Dorsolateral prefrontal cortex (tissue), 120 donors: ENCODE measurements at regions of chr12 and their contacts with region 1.

Region 1: GRCh38 chr12:31959161-31959700 is at the start of gene RESF1:
- DNase-seq: peak; percentile 71 to 90 (median 85)
- H3K4me3 ChIP-seq: peak within 1 kb of the TSS; percentile 50 to 88 (median 73)
- H3K27ac ChIP-seq: peak within 1 kb of the TSS; percentile 41 to 95 (median 88)
- H3K27me3 ChIP-seq: no peaks in the 10 kb centered on the region
- CTCF ChIP-seq: peak in 18 of 56 donors; percentile 6 to 47 (median 22)
- total RNA-seq, gene RESF1: 21.6 to 58.1 (median 36.9) TPM

Region 2: DNA sequence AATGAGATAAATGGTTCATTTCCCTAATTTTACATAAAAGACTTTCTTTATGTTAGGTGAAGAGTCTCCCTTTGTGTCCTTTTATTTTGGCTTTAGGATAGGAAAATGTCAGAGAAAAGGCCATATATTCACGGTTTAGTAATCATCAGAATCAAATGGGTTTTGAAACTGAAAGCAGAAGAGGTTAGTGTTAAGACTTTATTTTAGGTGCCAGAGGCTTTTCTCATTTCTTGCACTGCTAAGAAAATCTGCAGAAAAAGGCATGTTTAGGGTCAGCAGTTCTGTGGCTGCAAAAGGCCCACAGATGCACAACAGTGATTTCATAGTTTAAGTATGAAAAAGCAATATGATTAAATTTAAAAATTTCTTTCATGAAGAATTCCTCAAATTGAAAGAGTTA is 552.9 kb before region 1 on chr12:
- intact Hi-C with region 1: loop called in 1 of 2 experiments (anchors 5 kb)
- DNase-seq: no peak
- H3K4me3 ChIP-seq: no peak overlapping the region
- H3K27ac ChIP-seq: peak overlapping the region in 1 of 59 donors; percentile 13
- H3K27me3 ChIP-seq: no peaks in the 10 kb centered on the region
- CTCF ChIP-seq: no peak

Region 3: GRCh38 chr12:31589904-31590641 is 369.2 kb before region 1 on chr12:
- intact Hi-C with region 1: loop called in 1 of 2 experiments (anchors 5 kb)
- DNase-seq: peak; percentile 50 to 77 (median 65)
- H3K4me3 ChIP-seq: peak overlapping the region; percentile 63 to 96 (median 87)
- H3K27ac ChIP-seq: peak overlapping the region; percentile 85 to 98 (median 96)
- H3K27me3 ChIP-seq: no peaks in the 10 kb centered on the region
- CTCF ChIP-seq: peak in 21 of 56 donors; percentile 3 to 50 (median 16)

Region 4: DNA sequence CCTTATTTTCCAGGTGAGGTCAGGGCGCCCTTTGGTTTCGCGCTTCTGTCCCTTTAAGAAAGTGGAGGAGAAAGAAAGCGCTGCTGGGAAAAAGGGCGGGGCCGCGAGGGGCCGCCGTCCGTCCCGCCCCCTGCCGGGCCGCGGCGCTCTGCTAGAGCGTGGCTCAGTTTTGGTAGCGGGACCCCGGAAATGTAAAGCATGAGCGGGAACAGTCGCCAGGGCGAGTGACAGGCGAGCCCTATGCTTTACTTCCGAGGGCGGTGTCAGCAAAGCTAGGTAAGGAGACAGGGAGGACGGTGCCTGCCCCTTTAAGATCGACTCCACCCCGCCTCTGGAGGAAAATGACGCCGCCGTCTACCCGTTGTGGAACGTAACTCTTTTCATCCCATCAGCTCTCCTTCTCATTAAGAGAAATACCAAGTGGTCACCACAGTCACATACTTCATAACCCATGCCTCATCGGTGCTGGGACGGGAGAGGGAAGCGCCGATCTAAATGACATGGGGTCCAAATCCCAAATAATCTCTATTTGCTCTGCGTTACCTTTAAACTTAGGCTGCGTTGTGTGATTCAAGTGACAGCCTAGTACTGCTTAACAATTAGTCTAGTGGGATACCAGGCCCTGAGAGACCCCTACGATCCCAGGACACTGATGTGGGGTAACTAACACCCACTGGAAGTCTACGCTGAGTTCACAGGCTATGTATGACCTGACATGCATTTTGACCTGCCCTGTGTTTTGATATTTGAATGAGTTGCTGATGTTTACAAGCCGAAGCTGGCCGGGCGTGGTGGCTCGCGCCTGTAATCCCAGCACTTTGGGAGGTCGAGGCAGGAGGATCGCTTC is 299.9 kb before region 1 on chr12 and contains the start of gene ETFBKMT:
- intact Hi-C with region 1: loop called (anchors 5 kb)
- DNase-seq: peak; percentile 68 to 94 (median 90)
- H3K4me3 ChIP-seq: peak within 1 kb of the TSS; percentile 59 to 97 (median 81)
- H3K27ac ChIP-seq: peak within 1 kb of the TSS; percentile 84 to 99 (median 96)
- H3K27me3 ChIP-seq: no peaks in the 10 kb centered on the region
- CTCF ChIP-seq: peak; percentile 29 to 89 (median 72)
- total RNA-seq, gene ETFBKMT: 1.6 to 8.4 (median 4.6) TPM

Region 5: DNA sequence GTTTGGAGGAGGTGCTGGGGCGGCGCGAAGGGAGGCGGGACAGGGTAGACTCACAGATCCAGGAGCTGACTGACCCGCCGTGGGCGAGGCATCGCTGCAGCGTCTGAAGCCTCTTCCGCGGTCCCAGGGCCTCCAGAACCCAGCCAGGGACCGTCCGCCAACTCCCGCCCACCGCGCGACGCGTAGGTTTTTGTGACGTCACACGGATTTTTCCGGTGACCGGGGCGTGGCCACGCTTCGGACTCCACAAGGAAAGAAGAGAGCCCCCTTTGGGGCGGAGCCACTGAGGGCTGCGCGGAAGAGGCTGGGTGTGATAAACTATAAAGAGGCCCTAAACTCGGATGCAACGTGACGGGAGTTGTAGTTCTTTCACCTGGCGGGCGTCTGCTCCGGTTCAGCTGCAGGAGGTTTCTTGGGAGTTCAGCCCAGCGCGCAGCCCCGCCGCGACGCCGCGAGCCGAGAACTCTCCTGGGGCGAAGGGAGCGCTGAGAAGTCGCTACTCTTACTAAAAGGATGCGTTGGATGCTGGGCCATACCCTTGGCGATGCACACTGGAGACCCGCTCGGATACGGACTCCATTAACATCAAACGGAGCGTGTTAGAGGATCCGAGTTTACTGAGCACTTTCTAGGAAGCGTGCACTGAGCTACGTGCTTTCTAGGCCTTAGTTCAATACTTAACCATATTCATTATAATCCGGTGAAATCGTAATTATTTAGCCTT is 230.2 kb before region 1 on chr12 and contains the start of gene AMN1:
- intact Hi-C with region 1: loop called (anchors 2 to 5 kb)
- DNase-seq: peak; percentile 98 to 99 (median 99)
- H3K4me3 ChIP-seq: peak within 1 kb of the TSS; percentile 65 to 97 (median 80)
- H3K27ac ChIP-seq: peak within 1 kb of the TSS; percentile 78 to 98 (median 93)
- H3K27me3 ChIP-seq: no peaks in the 10 kb centered on the region
- CTCF ChIP-seq: peak in 45 of 56 donors; percentile 6 to 60 (median 37)
- total RNA-seq, gene AMN1: 29.1 to 65.1 (median 46.0) TPM

Region 6: DNA sequence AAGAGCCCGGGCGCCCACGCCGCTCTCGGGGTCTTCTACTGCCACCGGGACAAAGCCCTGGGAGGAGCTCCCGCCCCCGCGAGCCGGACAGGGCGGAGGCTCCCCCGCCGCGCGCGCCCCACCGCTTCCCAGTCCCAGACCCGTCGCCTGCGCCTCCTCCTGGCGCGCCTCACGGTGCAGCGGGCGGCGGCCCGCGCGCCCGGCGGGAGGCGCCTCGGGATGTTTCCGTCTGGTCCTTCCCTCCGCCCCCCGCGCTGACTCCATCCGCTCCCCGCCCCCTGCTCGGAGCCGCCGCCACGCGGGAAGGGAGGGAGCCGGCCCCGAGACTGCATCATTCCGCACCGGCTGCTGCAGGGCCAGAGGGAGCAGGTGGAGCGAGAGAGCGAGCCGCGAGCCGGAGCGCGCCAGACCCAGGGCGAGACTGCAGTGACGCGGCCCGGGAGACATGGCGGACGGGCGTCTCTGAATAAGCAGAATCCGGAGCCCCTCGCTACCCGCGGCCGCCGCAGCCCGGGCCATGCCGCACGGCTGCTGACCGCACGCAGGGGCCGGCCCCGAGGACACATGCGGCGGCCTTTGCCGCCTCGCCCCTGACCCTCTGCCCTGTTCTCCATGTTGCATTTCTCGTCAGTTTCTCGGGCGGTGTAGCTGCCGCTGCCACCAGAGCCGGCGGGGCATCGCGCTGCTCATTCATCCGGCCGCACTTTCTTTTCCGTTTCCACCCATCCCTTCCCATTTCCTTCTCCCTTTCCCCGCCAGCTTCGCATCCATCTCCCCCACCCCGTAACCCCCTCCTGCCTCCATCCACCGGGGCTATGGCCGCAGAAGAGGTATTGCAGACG is 147.5 kb after region 1 on chr12 and contains the start of gene BICD1:
- intact Hi-C with region 1: loop called (anchors 2 to 10 kb)
- DNase-seq: peak; percentile 80 to 94 (median 90)
- H3K4me3 ChIP-seq: peak within 1 kb of the TSS; percentile 74 to 99 (median 92)
- H3K27ac ChIP-seq: peak within 1 kb of the TSS; percentile 56 to 97 (median 93)
- H3K27me3 ChIP-seq: no peaks in the 10 kb centered on the region
- CTCF ChIP-seq: peak in 54 of 56 donors; percentile 16 to 77 (median 50)
- total RNA-seq, gene BICD1: 52.6 to 94.5 (median 74.8) TPM

Region 7: GRCh38 chr12:32302218-32303173 is 343.3 kb after region 1 on chr12:
- intact Hi-C with region 1: loop called in 1 of 2 experiments (anchors 5 kb)
- DNase-seq: no peak
- H3K4me3 ChIP-seq: no peak overlapping the region
- H3K27ac ChIP-seq: no peak overlapping the region
- H3K27me3 ChIP-seq: no peaks in the 10 kb centered on the region
- CTCF ChIP-seq: peak in 31 of 56 donors; percentile 9 to 59 (median 33)